Upper lobe of right lung (tissue), 1 donor: ENCODE measurements at regions of chr1 and their contacts with region 1.

Region 1: GRCh38 chr1:234499119-234499942 is 20.4 kb upstream of the TARBP1 start:
- DNase-seq: peak; percentile 95
- ATAC-seq: peak; percentile 99
- H3K4me3 ChIP-seq: peak overlapping the region; percentile 5
- H3K27ac ChIP-seq: peak overlapping the region; percentile 83
- H3K4me1 ChIP-seq: peaks cover 23% of the 10 kb centered on the region
- H3K27me3 ChIP-seq: no peaks in the 10 kb centered on the region
- CTCF ChIP-seq: peak; percentile 96

Region 2: GRCh38 chr1:234427950-234428642 is 71.2 kb before region 1 on chr1:
- intact Hi-C with region 1: no loop called
- DNase-seq: no peak
- ATAC-seq: no peak
- H3K4me3 ChIP-seq: no peak overlapping the region
- H3K27ac ChIP-seq: no peak overlapping the region
- H3K4me1 ChIP-seq: no peaks in the 10 kb centered on the region
- H3K27me3 ChIP-seq: no peaks in the 10 kb centered on the region
- CTCF ChIP-seq: no peak

Region 3: DNA sequence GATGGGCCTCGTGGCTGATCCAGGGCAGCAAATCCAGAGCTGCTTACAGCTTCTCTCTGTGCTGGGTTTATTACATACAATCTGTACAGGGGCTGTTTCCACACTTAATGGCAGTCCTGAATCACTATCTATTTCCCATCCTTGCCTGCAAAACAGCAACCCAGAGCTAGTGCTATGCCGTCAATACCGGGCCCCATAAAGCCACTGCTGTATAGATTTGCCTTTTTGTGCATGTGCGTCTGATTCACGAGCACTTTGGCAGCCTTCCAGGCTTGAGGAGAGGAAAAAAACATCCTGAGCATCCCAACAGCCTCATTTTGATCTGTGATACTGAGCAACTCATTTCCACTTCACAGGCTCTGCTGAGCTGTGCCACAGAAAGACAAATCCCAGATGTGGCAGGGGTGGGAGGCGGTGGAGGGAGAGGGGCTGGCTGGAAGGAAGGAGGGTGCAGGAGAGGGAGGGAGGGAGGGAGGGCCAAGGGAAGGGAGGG is 44.8 kb after region 1 on chr1:
- intact Hi-C with region 1: no loop called
- DNase-seq: no peak
- ATAC-seq: peak; percentile 61
- H3K4me3 ChIP-seq: no peak overlapping the region
- H3K27ac ChIP-seq: peak overlapping the region; percentile 55
- H3K4me1 ChIP-seq: peaks cover 13% of the 10 kb centered on the region
- H3K27me3 ChIP-seq: no peaks in the 10 kb centered on the region
- CTCF ChIP-seq: no peak

Region 4: DNA sequence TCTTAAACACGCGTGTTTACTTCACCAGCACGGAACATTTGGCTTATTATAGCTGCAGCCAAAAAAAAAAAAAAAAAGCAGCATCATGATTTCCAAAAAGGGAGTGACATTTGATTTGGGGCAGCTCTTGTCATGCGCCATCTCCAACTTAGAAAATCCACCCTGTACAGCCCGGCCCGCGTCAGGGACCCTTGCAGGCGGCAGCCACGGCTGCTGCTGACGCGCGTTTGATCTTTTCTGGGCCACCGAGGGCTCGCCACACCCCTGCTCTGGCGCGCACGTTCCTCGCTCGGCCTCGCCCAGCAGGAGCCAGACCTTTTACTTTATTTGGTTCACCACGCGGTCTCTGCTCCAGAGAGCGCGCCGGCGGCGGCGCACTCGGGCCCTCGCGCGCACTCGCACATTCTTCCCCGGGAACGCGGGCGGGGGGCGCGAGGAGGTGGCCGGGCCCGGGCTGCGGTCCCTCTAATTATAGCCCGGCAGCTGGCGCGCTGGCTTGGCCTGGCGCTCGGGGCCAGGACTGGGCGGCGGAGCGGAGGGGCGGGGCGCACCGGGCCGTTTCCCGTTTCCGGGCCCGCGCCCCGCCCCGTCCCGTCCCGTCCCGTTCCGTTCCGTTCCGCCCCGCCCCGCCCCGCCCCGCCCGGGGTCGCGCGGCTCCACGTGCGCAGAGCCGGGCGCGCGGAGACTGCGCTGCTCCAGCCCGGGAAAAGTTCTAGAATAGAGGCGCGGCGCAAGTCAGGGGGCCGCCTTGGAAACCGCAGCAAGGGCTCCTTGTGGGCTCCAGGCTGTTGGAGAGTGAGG is 100.5 kb after region 1 on chr1:
- intact Hi-C with region 1: loop called (anchors 10 kb)
- DNase-seq: peak; percentile 94
- ATAC-seq: peak; percentile 94
- H3K4me3 ChIP-seq: peak overlapping the region; percentile 56
- H3K27ac ChIP-seq: peak overlapping the region; percentile 99
- H3K4me1 ChIP-seq: peaks cover 52% of the 10 kb centered on the region
- H3K27me3 ChIP-seq: no peaks in the 10 kb centered on the region
- CTCF ChIP-seq: no peak

Region 5: DNA sequence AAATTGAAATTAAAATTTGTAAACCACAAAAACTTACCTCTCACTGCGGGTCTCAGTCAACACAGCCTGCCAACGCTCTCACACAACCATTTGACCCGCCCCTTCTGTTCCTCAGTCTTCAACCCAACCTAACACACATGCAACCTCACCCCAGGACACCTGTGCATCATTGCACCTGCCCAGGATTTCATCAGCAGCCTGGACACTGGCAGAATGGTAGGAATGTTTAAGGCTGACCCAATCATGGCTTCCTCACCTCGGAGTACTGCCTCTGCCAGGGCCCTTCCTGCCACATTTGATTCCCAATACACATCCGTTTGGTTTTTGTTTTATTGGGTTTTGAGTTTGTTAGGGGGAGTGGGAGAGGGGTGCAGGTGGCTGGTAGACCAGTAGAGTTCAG is 588.6 kb after region 1 on chr1:
- intact Hi-C with region 1: loop called (anchors 5 kb)
- DNase-seq: no peak
- ATAC-seq: no peak
- H3K4me3 ChIP-seq: no peak overlapping the region
- H3K27ac ChIP-seq: no peak overlapping the region
- H3K4me1 ChIP-seq: peaks cover 14% of the 10 kb centered on the region
- H3K27me3 ChIP-seq: no peaks in the 10 kb centered on the region
- CTCF ChIP-seq: no peak